ENCODE measurements at regions of chr9 and their contacts with region 1.

Region 1: GRCh38 chr9:98207606-98208005 is 15.2 kb upstream of the CORO2A start:
- DNase-seq: no peak
- H3K4me3 ChIP-seq: no peak overlapping the region
- H3K27ac ChIP-seq: no peak overlapping the region
- H3K4me1 ChIP-seq: no peaks in the 10 kb centered on the region
- H3K27me3 ChIP-seq: no peaks in the 10 kb centered on the region
- CTCF ChIP-seq: no peak
- EP300 ChIP-seq: no peak
- RAD21 ChIP-seq: no peak

Region 2: DNA sequence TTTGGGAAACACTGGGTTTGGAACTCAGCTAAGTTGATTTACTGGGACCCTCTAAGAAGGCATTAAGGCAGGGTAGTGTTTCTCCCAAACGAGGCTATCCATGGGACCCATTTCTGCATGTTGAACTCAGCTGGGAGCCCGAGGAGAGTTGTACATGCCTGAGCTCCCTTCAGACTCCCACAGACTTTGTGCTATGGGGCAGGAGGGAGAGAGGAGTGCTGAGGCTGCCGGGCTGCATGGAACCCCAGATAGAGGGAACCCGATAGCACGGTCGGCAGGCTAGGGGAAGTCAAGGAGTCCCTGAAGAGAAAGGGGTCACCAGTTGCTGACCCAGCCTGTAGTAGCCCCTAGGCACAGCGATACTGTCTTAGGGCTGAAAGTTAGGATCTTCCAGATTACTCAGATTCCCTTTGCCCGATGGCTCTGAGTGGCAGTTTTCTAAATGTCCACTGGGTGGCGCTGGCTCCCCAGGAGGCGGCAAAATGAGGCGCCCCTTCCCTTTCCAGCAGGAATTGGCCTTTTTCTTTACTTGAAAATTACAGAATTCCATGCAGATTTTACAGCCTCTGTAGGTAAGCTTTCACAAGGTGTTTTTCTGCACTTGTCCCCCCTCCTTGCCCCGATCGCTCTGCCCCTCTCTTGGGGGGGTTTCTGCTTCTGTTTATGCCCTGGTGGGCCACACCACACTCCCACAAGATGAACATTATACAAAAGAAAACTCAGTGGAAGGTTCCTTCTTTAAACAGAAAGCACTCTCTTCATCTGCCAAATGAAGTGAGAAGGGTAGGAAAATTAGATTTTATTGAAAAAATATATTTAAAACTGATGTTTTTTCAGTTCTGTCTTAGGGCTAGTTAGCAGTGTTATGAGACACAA is 133.3 kb before region 1 on chr9:
- CTCF ChIA-PET with region 1: interaction called, 12 read pairs
- POLR2A ChIA-PET with region 1: no interaction called
- DNase-seq: peak; percentile 79
- H3K4me3 ChIP-seq: no peak overlapping the region
- H3K27ac ChIP-seq: no peak overlapping the region; a peak in 1 of 4 replicates
- H3K4me1 ChIP-seq: no peaks in the 10 kb centered on the region; a peak in 2 of 4 replicates
- H3K27me3 ChIP-seq: no peaks in the 10 kb centered on the region
- CTCF ChIP-seq: peak; percentile 96
- EP300 ChIP-seq: no peak
- RAD21 ChIP-seq: peak; percentile 91

Region 3: GRCh38 chr9:98118640-98119601 is 88.7 kb before region 1 on chr9 and contains the start of gene TRIM14:
- CTCF ChIA-PET with region 1: interaction called, 19 read pairs
- POLR2A ChIA-PET with region 1: no interaction called
- DNase-seq: peak; percentile 90
- H3K4me3 ChIP-seq: peak within 1 kb of the TSS; percentile 64 to 65
- H3K27ac ChIP-seq: peak within 1 kb of the TSS; percentile 21 to 30; a peak in 2 of 4 replicates
- H3K4me1 ChIP-seq: peaks cover 0 to 30% of the 10 kb centered on the region in 2 experiments; a peak in 3 of 4 replicates
- H3K27me3 ChIP-seq: no peaks in the 10 kb centered on the region
- CTCF ChIP-seq: peak; percentile 38
- EP300 ChIP-seq: no peak
- RAD21 ChIP-seq: peak; percentile 51
- polyA plus RNA-seq, gene TRIM14: 13.4 and 15.3 TPM in 2 replicates

Region 4: GRCh38 chr9:98192503-98193335 is 14.9 kb before region 1 on chr9 and contains the start of gene CORO2A:
- CTCF ChIA-PET with region 1: interaction called, 23 read pairs
- POLR2A ChIA-PET with region 1: no interaction called
- DNase-seq: peak; percentile 98
- H3K4me3 ChIP-seq: peak within 1 kb of the TSS; percentile 73 to 76
- H3K27ac ChIP-seq: peak within 1 kb of the TSS; percentile 36 to 74; a peak in 2 of 4 replicates
- H3K4me1 ChIP-seq: peaks cover 0 to 11% of the 10 kb centered on the region in 2 experiments; a peak in 1 of 4 replicates
- H3K27me3 ChIP-seq: no peaks in the 10 kb centered on the region
- CTCF ChIP-seq: peak; percentile 57
- EP300 ChIP-seq: no peak
- RAD21 ChIP-seq: peak; percentile 31
- polyA plus RNA-seq, gene CORO2A: 2.3 and 2.7 TPM in 2 replicates

Region 5: GRCh38 chr9:98226957-98227356 is 19.4 kb after region 1 on chr9:
- CTCF ChIA-PET with region 1: interaction called, 12 read pairs
- POLR2A ChIA-PET with region 1: no interaction called
- DNase-seq: no peak
- H3K4me3 ChIP-seq: no peak overlapping the region
- H3K27ac ChIP-seq: no peak overlapping the region
- H3K4me1 ChIP-seq: peaks cover 4 to 18% of the 10 kb centered on the region in 2 experiments; a peak in 3 of 4 replicates
- H3K27me3 ChIP-seq: no peaks in the 10 kb centered on the region
- CTCF ChIP-seq: no peak
- EP300 ChIP-seq: no peak
- RAD21 ChIP-seq: no peak

Region 6: DNA sequence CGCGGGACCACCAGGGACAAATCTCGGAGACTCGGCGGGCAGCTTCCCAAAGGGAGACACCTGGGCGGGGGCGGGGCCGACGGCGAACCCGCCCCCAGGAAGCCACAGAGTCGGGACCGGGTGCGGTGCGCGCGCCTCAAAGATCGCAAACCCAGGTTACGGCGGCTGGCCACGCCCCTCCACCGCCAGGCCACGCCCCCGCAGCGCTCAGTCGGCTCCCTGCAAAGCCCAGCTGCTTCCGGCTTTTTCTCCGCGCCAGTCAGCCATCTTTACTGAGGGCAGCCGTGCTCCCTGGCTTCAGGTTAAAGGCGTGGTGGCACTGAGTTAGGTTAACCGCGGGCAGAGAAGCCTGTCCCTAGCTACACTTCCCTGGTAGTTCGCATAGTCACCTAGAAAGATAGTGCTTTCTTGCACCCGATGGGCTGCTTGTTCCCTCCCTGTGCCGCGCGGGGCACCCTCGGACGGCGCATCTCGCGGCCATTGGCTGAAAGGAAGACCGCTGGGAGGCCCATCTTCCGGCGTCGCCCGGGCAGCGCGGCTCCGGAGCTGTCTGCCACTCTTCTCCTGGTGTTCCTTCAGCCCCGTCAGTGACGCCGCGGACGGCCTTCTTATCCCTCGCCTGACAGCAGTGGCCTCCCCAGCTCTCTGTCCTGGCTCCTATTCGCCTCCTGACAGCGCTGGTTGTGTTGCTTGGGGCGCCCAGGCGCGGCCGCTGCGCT is 48.1 kb after region 1 on chr9 and contains the start of gene TBC1D2:
- CTCF ChIA-PET with region 1: interaction called, 24 read pairs
- POLR2A ChIA-PET with region 1: interaction called, 5 read pairs
- DNase-seq: peak; percentile 98
- H3K4me3 ChIP-seq: peak within 1 kb of the TSS; percentile 81 to 85
- H3K27ac ChIP-seq: peak within 1 kb of the TSS; percentile 92 to 98
- H3K4me1 ChIP-seq: peaks cover 7 to 11% of the 10 kb centered on the region in 2 experiments
- H3K27me3 ChIP-seq: no peaks in the 10 kb centered on the region
- CTCF ChIP-seq: peak; percentile 30; the same call in 1 of the 2 replicates
- EP300 ChIP-seq: no peak
- RAD21 ChIP-seq: no peak
- polyA plus RNA-seq, gene TBC1D2: 5.1 and 5.6 TPM in 2 replicates

Region 7: DNA sequence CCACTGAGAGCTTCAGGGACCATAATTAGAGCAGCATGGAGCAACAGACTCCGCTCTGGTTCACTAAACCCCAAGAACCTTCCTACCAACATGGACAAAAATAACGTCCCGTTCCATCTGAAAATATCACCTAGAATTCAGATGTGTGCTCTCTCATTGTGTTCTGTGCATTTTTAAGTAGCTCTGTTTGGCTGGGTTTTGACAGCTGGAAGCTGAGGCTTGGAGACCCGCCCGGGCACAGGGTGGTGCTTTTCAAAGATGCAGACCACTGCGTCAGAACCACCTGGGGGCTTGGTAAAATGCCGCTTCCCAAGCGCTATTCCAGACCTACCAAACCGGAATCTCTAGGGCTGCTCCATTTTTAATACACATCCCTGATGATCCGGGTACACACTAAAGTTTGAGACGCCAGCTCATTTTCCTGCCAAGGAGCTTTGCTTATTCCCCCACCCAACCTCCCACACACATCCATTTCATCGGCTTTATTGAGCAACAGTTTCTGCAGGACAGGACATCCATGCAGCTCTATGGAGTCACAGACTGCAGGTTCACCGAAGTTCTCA is 396.3 kb after region 1 on chr9:
- CTCF ChIA-PET with region 1: no interaction called
- POLR2A ChIA-PET with region 1: no interaction called
- DNase-seq: no peak
- H3K4me3 ChIP-seq: no peak overlapping the region
- H3K27ac ChIP-seq: no peak overlapping the region
- H3K4me1 ChIP-seq: no peaks in the 10 kb centered on the region
- H3K27me3 ChIP-seq: peaks cover 4% of the 10 kb centered on the region; the same call in 1 of the 2 replicates
- CTCF ChIP-seq: no peak
- EP300 ChIP-seq: no peak
- RAD21 ChIP-seq: no peak